ENCODE measurements at regions of chr7 and their contacts with region 1.

Region 1: GRCh38 chr7:29297194-29297890 is 102.8 kb downstream of the CHN2 start:
- DNase-seq: peak; percentile 81
- ATAC-seq: peak; percentile 45
- H3K4me3 Mint-ChIP-seq: peak overlapping the region; percentile 5; the same call in 1 of the 2 replicates
- H3K27ac Mint-ChIP-seq: no peak overlapping the region
- H3K4me1 Mint-ChIP-seq: peaks cover 80% of the 10 kb centered on the region
- H3K27me3 Mint-ChIP-seq: no peaks in the 10 kb centered on the region
- CTCF ChIP-seq: peak; percentile 71

Region 2: DNA sequence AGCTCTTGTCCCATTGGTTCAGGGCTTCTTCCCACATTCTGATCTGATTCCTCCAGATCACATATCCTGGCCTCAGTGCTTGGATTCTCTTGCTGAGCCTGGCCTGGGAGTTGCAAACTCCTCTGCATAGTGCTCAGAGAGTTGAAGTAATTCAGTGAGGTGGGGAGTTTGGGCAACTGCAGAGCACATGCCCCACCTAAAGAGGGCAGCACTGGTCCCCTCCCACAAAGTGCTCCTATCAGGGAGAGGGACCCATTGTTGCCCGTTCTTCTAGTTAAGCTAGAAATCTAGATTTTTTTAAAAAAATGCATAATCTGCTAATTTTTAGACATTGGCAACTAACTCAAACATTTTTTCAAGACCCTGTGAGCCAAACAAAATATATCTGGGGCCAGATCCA is 57.7 kb before region 1 on chr7:
- CTCF ChIA-PET with region 1: interaction called, 13 read pairs
- POLR2A ChIA-PET with region 1: no interaction called
- DNase-seq: peak; percentile 58
- ATAC-seq: peak; percentile 82
- H3K4me3 Mint-ChIP-seq: no peak overlapping the region
- H3K27ac Mint-ChIP-seq: no peak overlapping the region
- H3K4me1 Mint-ChIP-seq: peaks cover 24% of the 10 kb centered on the region
- H3K27me3 Mint-ChIP-seq: no peaks in the 10 kb centered on the region
- CTCF ChIP-seq: peak; percentile 67

Region 3: GRCh38 chr7:29281782-29282541 is 15.4 kb before region 1 on chr7:
- CTCF ChIA-PET with region 1: interaction called, 32 read pairs
- POLR2A ChIA-PET with region 1: no interaction called
- DNase-seq: no peak
- ATAC-seq: no peak
- H3K4me3 Mint-ChIP-seq: no peak overlapping the region
- H3K27ac Mint-ChIP-seq: no peak overlapping the region
- H3K4me1 Mint-ChIP-seq: peaks cover 23% of the 10 kb centered on the region
- H3K27me3 Mint-ChIP-seq: no peaks in the 10 kb centered on the region
- CTCF ChIP-seq: no peak

Region 4: DNA sequence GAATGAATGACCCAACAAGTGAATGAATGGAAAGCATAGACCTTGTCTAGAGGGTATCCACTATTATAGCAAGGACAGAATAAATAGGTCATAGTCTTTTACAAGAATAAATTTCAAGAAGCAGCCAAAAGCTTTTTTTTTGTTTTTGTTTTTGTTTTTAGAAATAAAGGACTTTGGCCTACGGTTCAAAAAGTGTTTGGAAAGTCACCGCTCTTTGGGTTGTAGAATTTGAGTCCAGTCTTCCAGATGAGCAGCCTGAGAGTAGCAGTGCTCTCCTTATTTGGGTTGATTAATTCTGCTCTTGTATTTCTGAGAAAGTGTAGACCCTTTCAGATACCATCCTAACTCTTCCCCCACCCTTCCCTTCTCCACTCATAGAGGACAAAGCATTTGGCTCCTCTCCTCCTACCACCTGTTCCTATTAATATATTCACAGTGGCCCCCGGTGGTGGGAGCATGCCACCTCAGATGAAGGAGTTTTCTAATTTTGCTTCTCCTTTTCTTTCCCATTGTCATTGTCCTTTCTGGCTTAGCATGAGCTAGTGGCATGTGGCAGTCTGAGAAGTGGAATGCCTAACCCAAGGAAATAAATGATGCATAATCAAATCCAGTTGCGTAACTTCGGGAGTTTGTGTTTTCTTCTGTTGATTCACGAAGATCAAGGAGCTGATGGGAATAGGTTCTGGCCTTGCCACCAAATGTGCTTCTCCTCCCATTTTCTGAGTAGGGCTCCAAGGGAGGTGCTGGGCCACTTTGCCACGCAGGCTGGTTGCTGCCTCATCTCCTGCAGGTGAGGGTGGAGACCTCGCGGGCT is 11.9 kb after region 1 on chr7:
- CTCF ChIA-PET with region 1: interaction called, 56 read pairs
- POLR2A ChIA-PET with region 1: no interaction called
- DNase-seq: no peak
- ATAC-seq: peak; percentile 25; the same call in 1 of the 2 replicates
- H3K4me3 Mint-ChIP-seq: no peak overlapping the region
- H3K27ac Mint-ChIP-seq: no peak overlapping the region
- H3K4me1 Mint-ChIP-seq: peaks cover 59% of the 10 kb centered on the region
- H3K27me3 Mint-ChIP-seq: no peaks in the 10 kb centered on the region; the same call in 1 of the 2 replicates
- CTCF ChIP-seq: no peak

Region 5: GRCh38 chr7:29319719-29320521 is 22.6 kb after region 1 on chr7:
- CTCF ChIA-PET with region 1: interaction called, 13 read pairs
- POLR2A ChIA-PET with region 1: no interaction called
- DNase-seq: no peak
- ATAC-seq: no peak
- H3K4me3 Mint-ChIP-seq: no peak overlapping the region
- H3K27ac Mint-ChIP-seq: no peak overlapping the region; the same call in 1 of the 2 replicates
- H3K4me1 Mint-ChIP-seq: peaks cover 32% of the 10 kb centered on the region
- H3K27me3 Mint-ChIP-seq: no peaks in the 10 kb centered on the region; the same call in 1 of the 2 replicates
- CTCF ChIP-seq: no peak

Region 6: DNA sequence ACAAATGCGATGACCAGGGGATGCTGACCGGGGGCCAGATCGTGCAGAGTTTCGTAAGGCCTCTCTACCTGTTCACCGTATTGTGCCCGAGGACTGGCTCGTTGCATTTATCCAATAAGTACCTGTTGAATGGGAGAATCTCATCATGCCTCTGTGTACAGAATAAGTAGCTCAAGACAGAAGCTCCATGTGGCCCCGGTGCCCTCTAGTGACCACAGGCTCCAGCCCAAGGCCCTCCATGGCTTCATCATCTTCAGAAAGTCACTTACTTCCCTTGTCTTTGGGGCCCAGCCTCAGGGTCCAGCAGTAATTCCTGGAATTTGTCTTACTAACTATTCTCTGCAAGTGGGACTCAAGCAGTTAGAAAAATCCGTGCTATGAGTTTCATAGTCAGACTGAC is 48.3 kb after region 1 on chr7:
- CTCF ChIA-PET with region 1: interaction called, 11 read pairs
- POLR2A ChIA-PET with region 1: no interaction called
- DNase-seq: peak; percentile 66
- ATAC-seq: peak; percentile 90
- H3K4me3 Mint-ChIP-seq: no peak overlapping the region
- H3K27ac Mint-ChIP-seq: no peak overlapping the region
- H3K4me1 Mint-ChIP-seq: no peaks in the 10 kb centered on the region
- H3K27me3 Mint-ChIP-seq: peaks cover 4% of the 10 kb centered on the region; the same call in 1 of the 2 replicates
- CTCF ChIP-seq: 0 out of 2 replicates have a peak, but pooled peaks have one; percentile 18

Region 7: GRCh38 chr7:29356631-29357030 is 59.3 kb after region 1 on chr7:
- CTCF ChIA-PET with region 1: no interaction called
- POLR2A ChIA-PET with region 1: no interaction called
- DNase-seq: no peak
- ATAC-seq: no peak
- H3K4me3 Mint-ChIP-seq: no peak overlapping the region
- H3K27ac Mint-ChIP-seq: no peak overlapping the region
- H3K4me1 Mint-ChIP-seq: peaks cover 4% of the 10 kb centered on the region
- H3K27me3 Mint-ChIP-seq: no peaks in the 10 kb centered on the region
- CTCF ChIP-seq: no peak

Measured in WTC11 (cell line).